ENCODE measurements at regions of chr6 and their contacts with region 1.

Region 1: GRCh38 chr6:143940011-143940597 is 68.0 kb downstream of the PLAGL1 start:
- DNase-seq: peak; percentile 34 to 79 (median 44)
- ATAC-seq: peak; percentile 97
- H3K4me3 ChIP-seq: no peak overlapping the region
- H3K4me3 Mint-ChIP-seq: no peak overlapping the region
- H3K27ac ChIP-seq: no peak overlapping the region
- H3K27ac Mint-ChIP-seq: no peak overlapping the region
- H3K4me1 ChIP-seq: peaks cover 8% of the 10 kb centered on the region
- H3K4me1 Mint-ChIP-seq: peaks cover 6% of the 10 kb centered on the region
- H3K27me3 ChIP-seq: no peaks in the 10 kb centered on the region
- H3K27me3 Mint-ChIP-seq: no peaks in the 10 kb centered on the region
- CTCF ChIP-seq: peak; percentile 86

Region 2: DNA sequence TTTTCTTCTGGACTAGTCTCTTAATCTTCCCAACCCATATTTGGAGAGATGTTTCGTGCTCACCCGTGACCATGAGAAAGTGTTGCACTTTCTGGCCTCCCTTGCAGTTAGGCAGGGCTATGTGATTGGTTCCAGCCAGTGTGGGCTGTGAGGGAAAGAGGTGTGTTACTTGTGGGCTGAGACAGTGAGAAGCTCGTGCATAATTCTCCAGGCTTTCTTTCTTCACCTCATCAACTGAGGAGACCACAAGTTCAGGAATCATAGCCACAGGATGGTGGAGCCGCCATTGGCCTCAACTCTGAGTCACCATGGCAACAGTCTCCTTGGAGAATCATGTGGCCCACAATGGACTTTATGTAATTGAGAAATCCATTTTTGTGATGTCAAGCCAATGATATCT is 371.1 kb before region 1 on chr6:
- CTCF ChIA-PET with region 1: no interaction called
- POLR2A ChIA-PET with region 1: interaction called, 3 read pairs
- intact Hi-C with region 1: loop called (anchors 2 to 5 kb)
- DNase-seq: peak in 3 of 14 experiments; percentile 32 to 50 (median 40)
- ATAC-seq: no peak
- H3K4me3 ChIP-seq: no peak overlapping the region
- H3K4me3 Mint-ChIP-seq: no peak overlapping the region
- H3K27ac ChIP-seq: no peak overlapping the region
- H3K27ac Mint-ChIP-seq: peak overlapping the region; percentile 31
- H3K4me1 ChIP-seq: peaks cover 10% of the 10 kb centered on the region
- H3K4me1 Mint-ChIP-seq: peaks cover 16% of the 10 kb centered on the region
- H3K27me3 ChIP-seq: no peaks in the 10 kb centered on the region
- H3K27me3 Mint-ChIP-seq: no peaks in the 10 kb centered on the region
- CTCF ChIP-seq: no peak

Region 3: GRCh38 chr6:144013486-144013909 is 73.4 kb after region 1 on chr6:
- CTCF ChIA-PET with region 1: interaction called, 15 read pairs
- POLR2A ChIA-PET with region 1: no interaction called
- intact Hi-C with region 1: loop called (anchors 1 to 2 kb)
- DNase-seq: peak; percentile 43 to 80 (median 55)
- ATAC-seq: peak; percentile 52
- H3K4me3 ChIP-seq: no peak overlapping the region
- H3K4me3 Mint-ChIP-seq: no peak overlapping the region
- H3K27ac ChIP-seq: no peak overlapping the region
- H3K27ac Mint-ChIP-seq: no peak overlapping the region
- H3K4me1 ChIP-seq: peaks cover 1% of the 10 kb centered on the region
- H3K4me1 Mint-ChIP-seq: no peaks in the 10 kb centered on the region
- H3K27me3 ChIP-seq: peaks cover 0 to 2% of the 10 kb centered on the region in 2 experiments
- H3K27me3 Mint-ChIP-seq: peaks cover 27% of the 10 kb centered on the region
- CTCF ChIP-seq: peak; percentile 98

Region 4: DNA sequence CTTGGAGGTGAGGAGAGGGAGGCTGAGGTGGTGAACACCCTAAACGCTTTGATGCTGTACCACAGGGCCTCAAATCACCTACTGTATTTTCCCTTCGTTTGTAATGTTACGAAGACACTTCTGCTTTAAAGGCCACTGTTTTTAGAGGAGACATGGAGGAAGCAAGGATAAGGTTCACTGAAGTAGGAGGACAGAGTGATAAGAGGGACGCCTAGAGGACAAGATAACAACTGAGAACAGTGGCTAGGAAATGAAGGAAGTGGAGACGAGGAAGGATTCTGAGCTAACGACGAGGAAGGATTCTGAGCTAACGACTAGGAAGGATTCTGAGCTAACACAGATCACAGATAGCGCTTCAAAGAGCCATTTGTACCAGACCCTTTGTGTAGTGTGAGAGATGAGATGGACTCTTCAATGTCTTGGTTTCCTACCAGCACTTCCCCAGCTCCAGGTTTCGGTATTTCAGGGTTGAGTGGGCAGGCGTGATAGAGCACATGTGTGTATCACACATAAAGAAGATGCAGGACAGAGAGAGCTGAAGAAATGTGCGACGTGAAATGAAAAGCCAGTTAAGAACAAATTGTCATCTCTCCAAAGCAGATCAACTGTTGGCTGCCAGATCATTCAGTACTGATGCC is 147.8 kb after region 1 on chr6:
- CTCF ChIA-PET with region 1: interaction called, 4 read pairs
- POLR2A ChIA-PET with region 1: no interaction called
- intact Hi-C with region 1: loop called in 1 of 2 experiments (anchors 5 kb)
- DNase-seq: no peak
- ATAC-seq: no peak
- H3K4me3 ChIP-seq: no peak overlapping the region
- H3K4me3 Mint-ChIP-seq: no peak overlapping the region
- H3K27ac ChIP-seq: no peak overlapping the region
- H3K27ac Mint-ChIP-seq: no peak overlapping the region
- H3K4me1 ChIP-seq: no peaks in the 10 kb centered on the region
- H3K4me1 Mint-ChIP-seq: no peaks in the 10 kb centered on the region
- H3K27me3 ChIP-seq: no peaks in the 10 kb centered on the region
- H3K27me3 Mint-ChIP-seq: no peaks in the 10 kb centered on the region
- CTCF ChIP-seq: no peak